B cell (primary cell): ENCODE measurements at regions of chr5 and their contacts with region 1.

Region 1: DNA sequence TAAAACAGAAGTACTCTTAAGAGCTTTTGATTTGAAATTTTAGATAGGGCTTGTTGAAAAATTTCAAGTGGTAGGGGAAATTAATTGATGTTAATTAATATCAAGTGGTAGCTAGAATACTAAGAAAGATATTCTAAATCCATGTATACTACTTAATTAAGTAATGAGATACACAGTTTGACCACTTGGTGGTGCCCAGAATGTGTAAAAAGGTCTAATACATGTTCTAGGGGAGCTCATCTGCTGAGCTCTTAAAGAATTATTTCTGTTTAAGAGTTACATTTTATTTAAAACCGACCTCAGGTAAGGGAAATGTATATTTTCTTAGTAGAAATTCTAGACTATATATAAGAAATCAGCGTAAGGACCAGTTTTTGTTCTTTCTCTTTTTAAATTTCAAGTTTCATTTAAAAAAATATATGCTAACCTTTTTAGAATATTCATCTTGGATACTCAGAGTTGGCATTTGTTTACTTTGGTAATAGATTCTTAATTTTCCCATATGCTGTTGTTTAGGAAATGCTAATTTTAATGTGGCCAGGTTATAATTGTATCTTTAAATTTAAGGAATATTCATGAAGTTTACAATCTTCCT is 61.5 kb downstream of the LNPEP start:
- DNase-seq: peak; percentile 61
- ATAC-seq: peak; percentile 66
- H3K4me3 ChIP-seq: no peak overlapping the region
- H3K4me3 Mint-ChIP-seq: no peak overlapping the region
- H3K27ac ChIP-seq: no peak overlapping the region
- H3K27ac Mint-ChIP-seq: no peak overlapping the region
- H3K4me1 ChIP-seq: no peaks in the 10 kb centered on the region
- H3K4me1 Mint-ChIP-seq: peaks cover 5% of the 10 kb centered on the region
- H3K27me3 ChIP-seq: no peaks in the 10 kb centered on the region
- H3K27me3 Mint-ChIP-seq: no peaks in the 10 kb centered on the region
- CTCF ChIP-seq: peak; percentile 78

Region 2: DNA sequence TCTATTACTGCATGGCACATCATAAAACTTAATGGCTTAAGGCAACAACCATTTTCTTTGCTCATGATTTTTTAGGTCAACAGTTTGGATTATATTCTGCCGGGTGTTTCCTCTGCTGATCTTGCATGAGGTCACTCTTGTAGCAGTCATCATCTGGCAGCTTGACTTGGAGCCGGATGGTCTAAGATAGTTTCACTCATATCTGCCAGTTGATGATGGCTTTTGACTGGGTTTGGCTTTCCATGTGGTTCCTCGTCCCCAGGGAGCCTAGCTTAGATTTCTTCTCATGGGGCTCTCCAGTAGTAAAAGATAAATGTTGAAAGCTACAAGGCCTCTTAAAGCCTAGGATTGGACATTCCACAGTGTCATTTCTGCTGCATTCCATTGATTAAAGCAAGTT is 34.1 kb before region 1 on chr5:
- CTCF ChIA-PET with region 1: interaction called, 3 read pairs
- POLR2A ChIA-PET with region 1: no interaction called
- intact Hi-C with region 1: loop called (anchors 5 kb)
- DNase-seq: peak; percentile 31
- ATAC-seq: peak; percentile 50
- H3K4me3 ChIP-seq: no peak overlapping the region
- H3K4me3 Mint-ChIP-seq: peak overlapping the region; percentile 60
- H3K27ac ChIP-seq: peak overlapping the region in 1 of 2 donors; percentile 86
- H3K27ac Mint-ChIP-seq: peak overlapping the region; percentile 63
- H3K4me1 ChIP-seq: peaks cover 41 to 60% of the 10 kb centered on the region in 2 donors
- H3K4me1 Mint-ChIP-seq: peaks cover 76% of the 10 kb centered on the region
- H3K27me3 ChIP-seq: no peaks in the 10 kb centered on the region
- H3K27me3 Mint-ChIP-seq: no peaks in the 10 kb centered on the region
- CTCF ChIP-seq: no peak

Region 3: GRCh38 chr5:97009212-97009898 is 12.0 kb after region 1 on chr5:
- CTCF ChIA-PET with region 1: interaction called, 15 read pairs
- POLR2A ChIA-PET with region 1: no interaction called
- intact Hi-C with region 1: no loop called
- DNase-seq: peak; percentile 81
- ATAC-seq: peak; percentile 68
- H3K4me3 ChIP-seq: peak overlapping the region in 2 of 5 experiments; percentile 11 to 44
- H3K4me3 Mint-ChIP-seq: peak overlapping the region; percentile 69
- H3K27ac ChIP-seq: peak overlapping the region; percentile 65 to 88
- H3K27ac Mint-ChIP-seq: peak overlapping the region; percentile 81
- H3K4me1 ChIP-seq: peaks cover 16 to 23% of the 10 kb centered on the region in 2 donors
- H3K4me1 Mint-ChIP-seq: peaks cover 26% of the 10 kb centered on the region
- H3K27me3 ChIP-seq: no peaks in the 10 kb centered on the region
- H3K27me3 Mint-ChIP-seq: no peaks in the 10 kb centered on the region
- CTCF ChIP-seq: no peak

Region 4: DNA sequence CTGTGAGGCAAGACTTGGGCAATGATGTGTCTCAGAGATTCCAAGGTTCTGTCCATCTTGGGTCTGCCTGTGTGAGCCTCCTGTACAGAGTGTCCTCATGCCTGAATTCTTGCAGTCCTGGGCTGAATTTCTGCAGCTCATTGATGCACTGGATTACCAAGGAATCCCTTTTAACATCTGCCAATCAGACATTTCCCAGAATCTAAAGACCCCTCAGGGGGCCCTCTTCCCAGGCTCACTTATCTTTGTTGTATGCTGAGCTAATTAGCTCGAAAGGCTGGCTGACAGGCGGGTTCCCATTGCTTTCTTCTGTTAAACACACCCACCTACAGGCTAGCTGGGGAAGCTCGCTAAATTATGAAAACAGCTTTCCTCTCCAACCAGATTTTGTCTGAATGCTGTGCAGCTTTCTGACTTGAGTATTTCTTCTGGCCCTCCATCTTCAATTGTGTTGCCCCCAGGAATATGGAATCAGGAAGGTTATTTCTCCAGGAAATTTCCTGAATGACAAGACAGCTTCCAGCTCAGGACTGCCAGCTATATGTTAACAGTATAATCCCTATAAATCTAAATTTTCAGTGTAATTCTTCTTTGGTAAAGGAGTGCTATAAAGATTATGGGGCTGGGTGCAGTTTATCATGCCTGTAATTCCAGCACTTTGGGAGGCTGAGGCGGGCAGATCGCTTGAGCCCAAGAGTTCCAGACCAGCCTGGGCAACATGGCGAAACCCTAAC is 145.3 kb after region 1 on chr5 and contains the start of gene LIX1:
- CTCF ChIA-PET with region 1: interaction called, 23 read pairs
- POLR2A ChIA-PET with region 1: no interaction called
- intact Hi-C with region 1: loop called (anchors 1 kb)
- DNase-seq: peak; percentile 34
- ATAC-seq: no peak
- H3K4me3 ChIP-seq: no peak within 1 kb of the TSS
- H3K4me3 Mint-ChIP-seq: no peak within 1 kb of the TSS
- H3K27ac ChIP-seq: no peak within 1 kb of the TSS
- H3K27ac Mint-ChIP-seq: no peak within 1 kb of the TSS
- H3K4me1 ChIP-seq: no peaks in the 10 kb centered on the region
- H3K4me1 Mint-ChIP-seq: no peaks in the 10 kb centered on the region
- H3K27me3 ChIP-seq: no peaks in the 10 kb centered on the region
- H3K27me3 Mint-ChIP-seq: no peaks in the 10 kb centered on the region
- CTCF ChIP-seq: peak; percentile 35
- total RNA-seq, gene LIX1: not detected in 2 replicates